ENCODE measurements at regions of chr6 and their contacts with region 1.

Region 1: GRCh38 chr6:45421709-45422502 is 44.2 kb upstream of the SUPT3H start:
- DNase-seq: peak; percentile 49 to 76
- H3K4me3 ChIP-seq: peak overlapping the region; percentile 98
- H3K27ac ChIP-seq: peak overlapping the region; percentile 72
- H3K4me1 ChIP-seq: peaks cover 22% of the 10 kb centered on the region
- H3K27me3 ChIP-seq: no peaks in the 10 kb centered on the region
- CTCF ChIP-seq: peak; percentile 17; the same call in 1 of the 2 replicates

Region 2: GRCh38 chr6:44630125-44631028 is 791.5 kb before region 1 on chr6:
- CTCF ChIA-PET with region 1: interaction called, 3 read pairs
- POLR2A ChIA-PET with region 1: interaction called, 3 read pairs
- intact Hi-C with region 1: loop called (anchors 1 kb)
- DNase-seq: peak in 1 of 2 experiments; percentile 57
- H3K4me3 ChIP-seq: no peak overlapping the region
- H3K27ac ChIP-seq: no peak overlapping the region
- H3K4me1 ChIP-seq: no peaks in the 10 kb centered on the region
- H3K27me3 ChIP-seq: no peaks in the 10 kb centered on the region
- CTCF ChIP-seq: peak; percentile 74

Region 3: DNA sequence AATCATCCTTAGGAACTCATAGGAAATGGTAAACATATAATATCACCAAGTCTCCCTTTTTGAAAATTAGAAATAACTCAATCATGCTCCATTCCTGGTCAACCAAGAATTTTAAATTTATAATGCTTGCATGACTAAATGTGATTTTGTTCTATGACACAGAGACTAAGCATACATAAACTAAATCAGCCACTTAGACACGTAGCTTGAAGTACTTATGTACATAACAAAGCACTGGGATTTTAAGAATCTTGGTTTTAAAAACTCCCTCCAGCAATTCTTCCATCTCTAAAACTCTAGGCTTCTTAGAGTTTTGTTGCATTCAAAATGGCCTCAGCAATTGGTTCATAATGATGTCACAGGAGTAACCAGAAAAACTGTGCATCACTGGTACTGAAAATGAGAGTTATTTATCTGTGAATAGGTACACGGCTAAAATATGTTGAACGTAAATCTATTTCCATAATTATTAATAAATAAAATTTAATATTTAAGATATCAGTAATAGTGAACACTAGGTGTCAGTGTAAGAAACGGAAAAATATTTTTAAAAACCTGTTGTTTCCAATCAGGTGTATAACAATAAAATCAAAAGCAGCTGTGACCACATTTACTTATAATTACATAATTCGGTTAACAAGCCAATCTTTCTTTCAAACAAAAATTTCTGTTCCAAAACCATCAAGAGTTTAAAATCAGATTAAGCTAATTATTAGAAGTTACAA is 335.4 kb before region 1 on chr6:
- CTCF ChIA-PET with region 1: no interaction called
- POLR2A ChIA-PET with region 1: no interaction called
- intact Hi-C with region 1: loop called (anchors 10 kb)
- DNase-seq: no peak
- H3K4me3 ChIP-seq: no peak overlapping the region
- H3K27ac ChIP-seq: no peak overlapping the region
- H3K4me1 ChIP-seq: no peaks in the 10 kb centered on the region
- H3K27me3 ChIP-seq: no peaks in the 10 kb centered on the region
- CTCF ChIP-seq: peak; percentile 36; the same call in 1 of the 2 replicates

Region 4: DNA sequence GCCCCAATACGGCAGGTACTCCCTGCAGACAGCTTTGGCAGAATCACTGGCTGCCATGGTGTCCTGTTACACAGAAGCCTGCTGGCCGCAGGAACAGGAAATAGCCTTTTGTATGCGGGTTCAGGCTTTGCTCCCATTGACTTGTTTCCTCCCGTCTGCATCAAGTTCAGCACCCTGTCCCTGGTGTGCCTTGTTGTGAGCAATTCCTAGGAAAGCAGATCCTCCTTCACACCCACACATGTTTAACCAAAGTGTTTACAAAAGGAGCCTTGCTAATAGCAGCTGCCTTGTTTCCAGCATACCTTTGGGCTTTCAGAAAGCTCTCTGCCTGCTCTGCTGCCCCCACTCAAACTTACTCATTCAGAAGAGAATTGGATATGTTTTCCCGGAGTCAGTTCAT is 83.0 kb after region 1 on chr6:
- CTCF ChIA-PET with region 1: no interaction called
- POLR2A ChIA-PET with region 1: no interaction called
- intact Hi-C with region 1: loop called (anchors 2 kb)
- DNase-seq: peak in 1 of 2 experiments; percentile 56
- H3K4me3 ChIP-seq: no peak overlapping the region
- H3K27ac ChIP-seq: no peak overlapping the region
- H3K4me1 ChIP-seq: peaks cover 32% of the 10 kb centered on the region
- H3K27me3 ChIP-seq: no peaks in the 10 kb centered on the region
- CTCF ChIP-seq: no peak

Region 5: GRCh38 chr6:45538641-45539547 is 117.0 kb after region 1 on chr6:
- CTCF ChIA-PET with region 1: no interaction called
- POLR2A ChIA-PET with region 1: no interaction called
- intact Hi-C with region 1: no loop called
- DNase-seq: no peak
- H3K4me3 ChIP-seq: no peak overlapping the region
- H3K27ac ChIP-seq: no peak overlapping the region
- H3K4me1 ChIP-seq: no peaks in the 10 kb centered on the region
- H3K27me3 ChIP-seq: no peaks in the 10 kb centered on the region
- CTCF ChIP-seq: no peak

Region 6: DNA sequence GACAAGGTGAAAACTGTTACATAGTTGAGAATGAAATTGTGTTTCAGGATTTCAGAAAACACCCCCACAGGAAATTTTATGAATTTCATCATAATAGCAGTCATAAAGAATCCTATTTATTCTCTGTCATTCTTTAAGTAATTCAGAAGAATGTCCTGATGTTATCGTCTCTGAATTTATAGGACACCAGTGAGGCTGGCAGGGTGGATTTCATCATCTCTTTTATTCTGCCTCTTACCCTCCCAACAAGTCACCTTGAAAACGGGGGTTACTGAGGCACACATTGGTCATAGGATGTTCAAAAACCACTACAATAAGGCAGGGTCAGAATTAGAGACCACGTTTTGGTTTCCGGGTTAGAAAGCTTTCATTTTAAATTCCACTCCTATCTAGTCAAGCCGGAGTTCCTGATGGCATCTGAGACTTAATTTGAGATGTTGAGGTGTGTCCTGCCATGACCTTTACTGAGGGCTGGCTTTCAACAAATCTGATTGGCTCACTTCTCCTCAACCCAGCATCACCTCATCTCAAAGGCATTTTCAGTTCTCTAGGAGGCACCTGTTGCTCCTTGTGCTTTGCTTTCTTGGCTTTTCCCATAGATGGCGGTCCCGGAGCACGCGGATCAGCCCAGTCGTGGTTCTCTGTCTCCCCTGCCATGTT is 186.5 kb after region 1 on chr6:
- CTCF ChIA-PET with region 1: no interaction called
- POLR2A ChIA-PET with region 1: interaction called, 3 read pairs
- intact Hi-C with region 1: loop called (anchors 1 kb)
- DNase-seq: peak; percentile 75 to 97
- H3K4me3 ChIP-seq: peak overlapping the region; percentile 2; the same call in 1 of the 2 replicates
- H3K27ac ChIP-seq: peak overlapping the region; percentile 95
- H3K4me1 ChIP-seq: peaks cover 62% of the 10 kb centered on the region
- H3K27me3 ChIP-seq: no peaks in the 10 kb centered on the region
- CTCF ChIP-seq: no peak

Region 7: GRCh38 chr6:45714741-45715507 is 293.0 kb after region 1 on chr6:
- CTCF ChIA-PET with region 1: interaction called, 5 read pairs
- POLR2A ChIA-PET with region 1: interaction called, 3 read pairs
- intact Hi-C with region 1: loop called (anchors 2 kb)
- DNase-seq: peak; percentile 52 to 75
- H3K4me3 ChIP-seq: no peak overlapping the region
- H3K27ac ChIP-seq: no peak overlapping the region
- H3K4me1 ChIP-seq: peaks cover 25% of the 10 kb centered on the region
- H3K27me3 ChIP-seq: no peaks in the 10 kb centered on the region
- CTCF ChIP-seq: peak; percentile 85

Region 8: GRCh38 chr6:46410334-46410953 is 988.5 kb after region 1 on chr6:
- CTCF ChIA-PET with region 1: no interaction called
- POLR2A ChIA-PET with region 1: no interaction called
- intact Hi-C with region 1: loop called (anchors 5 kb)
- DNase-seq: peak in 1 of 2 experiments; percentile 23
- H3K4me3 ChIP-seq: no peak overlapping the region
- H3K27ac ChIP-seq: no peak overlapping the region
- H3K4me1 ChIP-seq: no peaks in the 10 kb centered on the region
- H3K27me3 ChIP-seq: no peaks in the 10 kb centered on the region
- CTCF ChIP-seq: peak; percentile 91

Measured in PC-9 (cell line).